Breast epithelium (tissue), 4 donors: ENCODE measurements at regions of chr5 and their contacts with region 1.

Region 1: DNA sequence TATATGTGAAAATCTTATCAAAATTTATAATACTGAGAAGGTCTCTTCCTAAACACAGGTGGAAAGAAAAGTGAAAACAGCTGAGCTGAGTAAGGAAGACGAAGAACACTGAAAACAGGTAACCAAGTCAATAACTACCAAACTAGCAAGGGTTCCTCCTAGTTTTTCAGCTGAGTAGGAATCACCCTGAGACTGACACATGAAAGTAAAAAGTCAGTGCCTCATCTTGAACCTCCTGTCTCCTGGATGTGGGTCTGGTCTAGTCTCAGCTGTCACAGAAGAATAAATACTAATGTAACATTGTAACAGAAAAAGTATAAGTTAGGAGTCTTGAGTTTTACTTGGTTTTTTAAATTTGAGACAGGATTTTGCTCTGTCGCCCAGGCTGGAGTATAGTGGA is 121.0 kb downstream of the MEF2C start:
- DNase-seq: no peak
- H3K4me3 ChIP-seq: no peak overlapping the region
- H3K27ac ChIP-seq: no peak overlapping the region
- H3K4me1 ChIP-seq: no peaks in the 10 kb centered on the region
- H3K27me3 ChIP-seq: no peaks in the 10 kb centered on the region
- CTCF ChIP-seq: no peak
- POLR2A ChIP-seq: no peak

Region 2: DNA sequence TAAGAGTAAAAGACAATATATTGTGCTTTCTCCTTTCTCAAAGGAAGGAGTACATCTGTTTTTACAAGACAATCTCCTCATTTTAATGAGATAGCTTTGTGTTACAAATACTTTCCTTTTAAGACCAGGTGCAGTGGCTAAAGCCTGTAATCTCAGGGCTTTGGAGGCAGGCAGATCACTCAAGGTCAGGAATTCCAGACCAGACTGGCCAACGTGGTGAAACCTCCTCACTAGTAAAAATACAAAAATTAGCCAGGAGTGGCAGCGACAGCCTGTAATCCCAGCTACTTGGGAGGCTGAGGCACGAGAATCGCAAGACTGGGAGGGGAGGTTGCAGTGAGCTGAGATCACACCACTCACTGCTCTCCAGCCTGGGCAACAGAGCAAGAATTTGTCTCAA is 505.1 kb before region 1 on chr5:
- intact Hi-C with region 1: loop called (anchors 5 kb)
- DNase-seq: no peak
- H3K4me3 ChIP-seq: no peak overlapping the region
- H3K27ac ChIP-seq: no peak overlapping the region
- H3K4me1 ChIP-seq: no peaks in the 10 kb centered on the region
- H3K27me3 ChIP-seq: no peaks in the 10 kb centered on the region
- CTCF ChIP-seq: no peak
- POLR2A ChIP-seq: no peak

Region 3: DNA sequence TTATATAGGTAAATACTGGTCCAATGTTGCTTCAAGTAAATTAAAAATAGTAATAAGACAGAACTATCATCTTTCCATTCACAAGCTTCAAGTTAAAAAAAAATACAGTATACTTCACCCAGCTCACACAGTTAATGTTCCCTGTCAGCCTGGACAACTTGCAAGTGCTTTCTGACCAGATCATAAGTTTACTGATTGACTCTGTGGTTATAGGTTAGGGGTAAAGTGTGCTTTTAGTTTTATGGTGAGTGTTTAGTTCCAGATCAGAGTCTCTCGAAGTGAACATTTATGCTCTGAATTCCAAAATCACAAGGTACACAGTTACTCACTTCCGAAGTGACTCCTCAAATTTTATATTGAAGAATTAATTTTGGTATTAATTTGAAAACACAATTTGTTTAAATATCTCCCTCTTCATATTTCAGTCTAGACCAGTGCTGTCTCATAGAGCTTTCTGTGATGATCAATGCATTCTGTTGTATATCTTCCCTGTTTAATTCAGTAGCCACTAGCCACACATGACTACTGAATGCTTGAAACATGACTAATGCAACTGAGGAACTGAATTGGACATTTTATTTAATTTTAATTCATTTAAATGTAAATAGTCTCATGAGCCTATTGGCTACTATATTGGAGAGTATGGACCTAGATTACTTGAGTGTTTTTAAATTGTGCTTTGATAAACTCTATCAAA is 30.4 kb after region 1 on chr5:
- intact Hi-C with region 1: loop called (anchors 2 kb)
- DNase-seq: no peak
- H3K4me3 ChIP-seq: no peak overlapping the region
- H3K27ac ChIP-seq: no peak overlapping the region
- H3K4me1 ChIP-seq: no peaks in the 10 kb centered on the region
- H3K27me3 ChIP-seq: no peaks in the 10 kb centered on the region
- CTCF ChIP-seq: no peak
- POLR2A ChIP-seq: no peak

Region 4: DNA sequence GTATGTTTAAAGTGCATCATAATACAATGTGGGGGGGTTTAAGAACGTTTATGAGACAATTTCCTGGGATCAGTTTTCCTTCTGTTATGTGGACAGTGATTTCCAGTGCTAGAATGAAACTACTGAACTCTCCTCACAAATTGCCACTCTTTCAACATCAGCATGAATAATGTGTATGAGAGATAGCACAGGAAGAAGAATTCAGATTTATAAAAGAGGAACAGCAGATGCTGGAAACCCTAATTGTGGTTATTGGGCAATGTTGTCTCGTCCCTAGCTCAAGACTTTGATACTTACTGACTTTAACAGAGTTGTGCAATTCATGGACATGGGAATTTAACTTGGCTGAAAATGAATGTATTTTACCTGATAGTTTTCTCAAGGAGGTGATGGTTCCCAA is 531.9 kb after region 1 on chr5:
- intact Hi-C with region 1: no loop called
- DNase-seq: no peak
- H3K4me3 ChIP-seq: no peak overlapping the region
- H3K27ac ChIP-seq: no peak overlapping the region
- H3K4me1 ChIP-seq: no peaks in the 10 kb centered on the region
- H3K27me3 ChIP-seq: no peaks in the 10 kb centered on the region
- CTCF ChIP-seq: no peak
- POLR2A ChIP-seq: no peak